Naive thymus-derived CD8-positive, alpha-beta T cell (primary cell): ENCODE measurements at regions of chr3 and their contacts with region 1.

Region 1: GRCh38 chr3:196942226-196942914 is at the start of gene NCBP2:
- DNase-seq: peak; percentile 98 to 100 (median 99)
- ATAC-seq: peak; percentile 93
- H3K4me3 Mint-ChIP-seq: peak within 1 kb of the TSS; percentile 87 to 99 (median 96)
- H3K27ac Mint-ChIP-seq: peak within 1 kb of the TSS; percentile 95 to 99 (median 98)
- H3K4me1 Mint-ChIP-seq: peaks cover 23 to 54% (median 51%) of the 10 kb centered on the region in 4 donors
- H3K27me3 Mint-ChIP-seq: peaks cover 0 to 3% (median 0%) of the 10 kb centered on the region in 5 donors
- polyA plus RNA-seq, gene NCBP2: 54.9 to 87.0 (median 70.8) TPM

Region 2: GRCh38 chr3:196568246-196569002 is 373.9 kb before region 1 on chr3 and contains the starts of genes FBXO45 and WDR53:
- POLR2A ChIA-PET with region 1: interaction called, 16 read pairs
- DNase-seq: peak; percentile 92 to 96 (median 95)
- ATAC-seq: peak; percentile 91 to 92
- H3K4me3 Mint-ChIP-seq: peak within 1 kb of the TSS; percentile 85 to 99 (median 97)
- H3K27ac Mint-ChIP-seq: peak within 1 kb of the TSS; percentile 90 to 99 (median 98)
- H3K4me1 Mint-ChIP-seq: peaks cover 17 to 52% (median 35%) of the 10 kb centered on the region in 4 donors
- H3K27me3 Mint-ChIP-seq: no peaks in the 10 kb centered on the region
- polyA plus RNA-seq, gene FBXO45: 1.7 to 2.9 (median 2.8) TPM
- polyA plus RNA-seq, gene WDR53: 11.8 to 17.4 (median 12.6) TPM

Region 3: GRCh38 chr3:196867507-196868296 is 74.7 kb before region 1 on chr3 and contains the start of gene SENP5:
- POLR2A ChIA-PET with region 1: interaction called, 55 read pairs
- DNase-seq: peak; percentile 79 to 92 (median 88)
- ATAC-seq: peak; percentile 95
- H3K4me3 Mint-ChIP-seq: peak within 1 kb of the TSS; percentile 82 to 98 (median 95)
- H3K27ac Mint-ChIP-seq: peak within 1 kb of the TSS; percentile 92 to 98 (median 96)
- H3K4me1 Mint-ChIP-seq: peaks cover 6 to 39% (median 29%) of the 10 kb centered on the region in 4 donors
- H3K27me3 Mint-ChIP-seq: no peaks in the 10 kb centered on the region
- polyA plus RNA-seq, gene SENP5: 5.4 to 8.2 (median 8.0) TPM

Region 4: GRCh38 chr3:196969660-196970546 is 27.5 kb after region 1 on chr3:
- POLR2A ChIA-PET with region 1: interaction called, 14 read pairs
- DNase-seq: peak; percentile 32 to 73 (median 66)
- ATAC-seq: peak; percentile 75 to 82
- H3K4me3 Mint-ChIP-seq: peak overlapping the region; percentile 49 to 87 (median 80)
- H3K27ac Mint-ChIP-seq: peak overlapping the region in 4 of 10 donors; percentile 7 to 76 (median 22)
- H3K4me1 Mint-ChIP-seq: peaks cover 3 to 12% (median 6%) of the 10 kb centered on the region in 4 donors
- H3K27me3 Mint-ChIP-seq: peaks cover 0 to 19% (median 14%) of the 10 kb centered on the region in 5 donors